ENCODE measurements at regions of chr1 and their contacts with region 1.

Region 1: GRCh38 chr1:228727681-228728171 is 7.6 kb upstream of the RHOU start:
- DNase-seq: no peak
- H3K4me3 ChIP-seq: no peak overlapping the region
- H3K27ac ChIP-seq: no peak overlapping the region
- H3K4me1 ChIP-seq: no peaks in the 10 kb centered on the region
- H3K27me3 ChIP-seq: no peaks in the 10 kb centered on the region
- CTCF ChIP-seq: no peak
- POLR2A ChIP-seq: no peak

Region 2: DNA sequence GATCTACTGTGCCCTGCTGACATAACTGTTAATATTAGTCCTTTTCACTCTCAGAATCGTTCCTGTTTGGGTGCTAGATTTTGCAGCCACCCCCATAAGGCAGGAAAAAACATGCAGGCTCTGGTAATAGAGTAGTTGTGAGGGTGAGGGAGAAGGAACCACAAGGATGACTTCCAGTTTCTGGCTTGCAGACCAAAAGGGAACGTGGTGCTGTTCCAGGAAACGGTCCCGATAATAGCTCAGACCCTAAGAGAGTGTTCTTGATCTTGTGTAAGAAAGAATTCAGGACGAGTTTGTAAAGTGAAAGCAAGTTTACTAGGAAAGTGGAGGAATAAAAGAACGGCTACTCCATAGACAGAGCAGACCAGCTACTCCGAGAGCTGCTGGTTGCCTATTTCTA is 43.1 kb before region 1 on chr1:
- intact Hi-C with region 1: no loop called
- DNase-seq: no peak
- H3K4me3 ChIP-seq: no peak overlapping the region
- H3K27ac ChIP-seq: no peak overlapping the region
- H3K4me1 ChIP-seq: peaks cover 0 to 6% of the 10 kb centered on the region in 2 donors
- H3K27me3 ChIP-seq: no peaks in the 10 kb centered on the region
- CTCF ChIP-seq: no peak
- POLR2A ChIP-seq: no peak

Region 3: GRCh38 chr1:228830954-228831481 is 103.3 kb after region 1 on chr1:
- intact Hi-C with region 1: no loop called
- DNase-seq: no peak
- H3K4me3 ChIP-seq: no peak overlapping the region
- H3K27ac ChIP-seq: peak overlapping the region; percentile 51 to 77 (median 76)
- H3K4me1 ChIP-seq: peaks cover 23 to 40% of the 10 kb centered on the region in 2 donors
- H3K27me3 ChIP-seq: no peaks in the 10 kb centered on the region
- CTCF ChIP-seq: no peak
- POLR2A ChIP-seq: no peak

Region 4: GRCh38 chr1:229156872-229157271 is 429.1 kb after region 1 on chr1:
- intact Hi-C with region 1: loop called (anchors 5 kb)
- DNase-seq: peak; percentile 55 to 56
- H3K4me3 ChIP-seq: no peak overlapping the region
- H3K27ac ChIP-seq: peak overlapping the region in 2 of 3 donors; percentile 27 to 64
- H3K4me1 ChIP-seq: peaks cover 0 to 10% of the 10 kb centered on the region in 2 donors
- H3K27me3 ChIP-seq: no peaks in the 10 kb centered on the region
- CTCF ChIP-seq: peak in 5 of 6 experiments; percentile 14 to 87 (median 66)
- POLR2A ChIP-seq: no peak